ENCODE measurements at regions of chr1 and their contacts with region 1.

Region 1: DNA sequence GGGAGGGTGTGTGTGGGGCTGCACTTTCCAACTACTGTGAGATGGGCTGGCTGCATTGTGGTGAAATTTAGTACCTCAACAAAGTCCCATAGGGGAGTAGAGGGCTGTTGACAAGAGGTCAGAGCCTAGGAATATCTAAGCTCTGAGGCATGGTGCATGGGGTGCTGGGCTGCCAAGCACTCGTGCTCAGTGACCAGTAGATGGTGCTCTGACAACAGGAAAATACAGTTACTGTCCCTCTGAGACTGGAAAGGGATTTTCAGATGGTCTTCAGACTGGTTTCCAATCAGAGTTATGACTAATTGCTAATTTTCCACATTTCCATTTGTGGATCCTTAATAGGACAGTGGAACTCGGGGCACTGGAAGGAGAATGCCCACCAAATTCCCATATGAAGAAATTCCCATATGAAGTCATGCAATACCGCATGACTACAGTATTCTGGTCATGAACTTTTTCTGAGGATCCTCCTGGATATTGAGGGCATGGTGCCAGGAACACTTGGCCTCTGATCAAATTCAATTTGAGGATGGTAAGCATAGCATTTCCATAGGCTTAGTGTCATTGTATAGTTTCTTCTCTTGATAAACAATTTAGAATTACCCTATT is 4.1 kb upstream of the CACNA1E start:
- DNase-seq: peak; percentile 39 to 67 (median 65)
- ATAC-seq: peak; percentile 86 to 87
- H3K4me3 ChIP-seq: no peak overlapping the region
- H3K27ac ChIP-seq: no peak overlapping the region
- H3K4me1 ChIP-seq: no peaks in the 10 kb centered on the region
- H3K27me3 ChIP-seq: peaks cover 3% of the 10 kb centered on the region

Region 2: GRCh38 chr1:181416268-181416860 is 62.9 kb before region 1 on chr1:
- intact Hi-C with region 1: no loop called
- DNase-seq: no peak
- ATAC-seq: no peak
- H3K4me3 ChIP-seq: no peak overlapping the region
- H3K27ac ChIP-seq: no peak overlapping the region
- H3K4me1 ChIP-seq: no peaks in the 10 kb centered on the region
- H3K27me3 ChIP-seq: no peaks in the 10 kb centered on the region

Region 3: GRCh38 chr1:181541947-181542346 is 62.7 kb after region 1 on chr1:
- intact Hi-C with region 1: no loop called
- DNase-seq: no peak
- ATAC-seq: peak; percentile 48 to 55
- H3K4me3 ChIP-seq: no peak overlapping the region
- H3K27ac ChIP-seq: no peak overlapping the region
- H3K4me1 ChIP-seq: no peaks in the 10 kb centered on the region
- H3K27me3 ChIP-seq: no peaks in the 10 kb centered on the region

Region 4: GRCh38 chr1:181676269-181676668 is 197.0 kb after region 1 on chr1:
- intact Hi-C with region 1: loop called in 3 of 4 experiments (anchors 2 to 10 kb)
- DNase-seq: no peak
- ATAC-seq: no peak
- H3K4me3 ChIP-seq: no peak overlapping the region
- H3K27ac ChIP-seq: no peak overlapping the region
- H3K4me1 ChIP-seq: no peaks in the 10 kb centered on the region
- H3K27me3 ChIP-seq: peaks cover 3% of the 10 kb centered on the region

Region 5: GRCh38 chr1:181936768-181937581 is 457.7 kb after region 1 on chr1:
- intact Hi-C with region 1: loop called in 2 of 4 experiments (anchors 10 kb)
- DNase-seq: no peak
- ATAC-seq: peak; percentile 54 to 74
- H3K4me3 ChIP-seq: no peak overlapping the region
- H3K27ac ChIP-seq: no peak overlapping the region
- H3K4me1 ChIP-seq: no peaks in the 10 kb centered on the region
- H3K27me3 ChIP-seq: no peaks in the 10 kb centered on the region

Region 6: GRCh38 chr1:182069028-182069466 is 589.8 kb after region 1 on chr1:
- intact Hi-C with region 1: loop called in 2 of 4 experiments (anchors 10 kb)
- DNase-seq: peak; percentile 49 to 78 (median 76)
- ATAC-seq: peak; percentile 82 to 83
- H3K4me3 ChIP-seq: no peak overlapping the region
- H3K27ac ChIP-seq: no peak overlapping the region
- H3K4me1 ChIP-seq: no peaks in the 10 kb centered on the region
- H3K27me3 ChIP-seq: peaks cover 3% of the 10 kb centered on the region

Region 7: GRCh38 chr1:182084487-182085316 is 605.5 kb after region 1 on chr1:
- intact Hi-C with region 1: loop called in 2 of 4 experiments (anchors 5 kb)
- DNase-seq: peak; percentile 80 to 95 (median 92)
- ATAC-seq: peak; percentile 91 to 94
- H3K4me3 ChIP-seq: no peak overlapping the region
- H3K27ac ChIP-seq: no peak overlapping the region
- H3K4me1 ChIP-seq: no peaks in the 10 kb centered on the region
- H3K27me3 ChIP-seq: no peaks in the 10 kb centered on the region

Measured in right cardiac atrium (tissue), 5 donors.